ENCODE measurements at regions of chr22 and their contacts with region 1.

Region 1: GRCh38 chr22:38777087-38777671 is 16.8 kb downstream of the DNAL4 start:
- DNase-seq: no peak
- H3K4me3 ChIP-seq: no peak overlapping the region
- H3K27ac ChIP-seq: no peak overlapping the region
- H3K4me1 ChIP-seq: no peaks in the 10 kb centered on the region
- H3K27me3 ChIP-seq: no peaks in the 10 kb centered on the region
- CTCF ChIP-seq: no peak

Region 2: DNA sequence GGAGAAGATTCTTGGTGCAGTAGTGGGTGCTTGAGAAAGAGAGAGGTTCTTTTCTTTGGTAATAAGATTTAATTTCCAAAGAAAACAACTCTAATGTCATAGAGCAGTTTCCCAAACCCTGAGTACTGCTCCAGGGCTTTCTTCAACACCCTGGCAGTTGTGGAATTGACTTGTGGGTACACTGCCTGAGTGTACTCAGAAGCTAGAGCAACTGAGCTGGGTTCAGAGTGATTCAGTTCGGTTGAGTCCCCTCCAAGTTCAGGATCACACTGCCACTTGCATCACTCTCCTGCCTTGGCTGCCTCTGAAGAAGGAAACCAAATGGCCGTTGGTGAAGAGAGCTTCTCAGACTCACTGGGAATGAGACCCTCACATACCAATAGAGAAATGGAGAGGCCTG is 212.5 kb before region 1 on chr22:
- intact Hi-C with region 1: no loop called
- DNase-seq: no peak
- H3K4me3 ChIP-seq: no peak overlapping the region
- H3K27ac ChIP-seq: no peak overlapping the region
- H3K4me1 ChIP-seq: no peaks in the 10 kb centered on the region
- H3K27me3 ChIP-seq: no peaks in the 10 kb centered on the region
- CTCF ChIP-seq: no peak

Region 3: GRCh38 chr22:38843201-38843715 is 66.1 kb after region 1 on chr22:
- intact Hi-C with region 1: loop called (anchors 10 kb)
- DNase-seq: no peak
- H3K4me3 ChIP-seq: peak overlapping the region; percentile 37
- H3K27ac ChIP-seq: no peak overlapping the region
- H3K4me1 ChIP-seq: peaks cover 3% of the 10 kb centered on the region
- H3K27me3 ChIP-seq: peaks cover 23% of the 10 kb centered on the region
- CTCF ChIP-seq: no peak

Region 4: GRCh38 chr22:38981992-38982927 is 205.1 kb after region 1 on chr22 and contains the start of gene APOBEC3B:
- intact Hi-C with region 1: no loop called
- DNase-seq: peak; percentile 95
- H3K4me3 ChIP-seq: no peak within 1 kb of the TSS
- H3K27ac ChIP-seq: peak within 1 kb of the TSS; percentile 55
- H3K4me1 ChIP-seq: no peaks in the 10 kb centered on the region
- H3K27me3 ChIP-seq: no peaks in the 10 kb centered on the region
- CTCF ChIP-seq: no peak
- total RNA-seq, gene APOBEC3B: 9.3 to 18.9 TPM

Region 5: GRCh38 chr22:39039306-39040126 is 262.3 kb after region 1 on chr22:
- intact Hi-C with region 1: no loop called
- DNase-seq: no peak
- H3K4me3 ChIP-seq: no peak overlapping the region
- H3K27ac ChIP-seq: no peak overlapping the region
- H3K4me1 ChIP-seq: peaks cover 8% of the 10 kb centered on the region
- H3K27me3 ChIP-seq: no peaks in the 10 kb centered on the region
- CTCF ChIP-seq: no peak

Region 6: DNA sequence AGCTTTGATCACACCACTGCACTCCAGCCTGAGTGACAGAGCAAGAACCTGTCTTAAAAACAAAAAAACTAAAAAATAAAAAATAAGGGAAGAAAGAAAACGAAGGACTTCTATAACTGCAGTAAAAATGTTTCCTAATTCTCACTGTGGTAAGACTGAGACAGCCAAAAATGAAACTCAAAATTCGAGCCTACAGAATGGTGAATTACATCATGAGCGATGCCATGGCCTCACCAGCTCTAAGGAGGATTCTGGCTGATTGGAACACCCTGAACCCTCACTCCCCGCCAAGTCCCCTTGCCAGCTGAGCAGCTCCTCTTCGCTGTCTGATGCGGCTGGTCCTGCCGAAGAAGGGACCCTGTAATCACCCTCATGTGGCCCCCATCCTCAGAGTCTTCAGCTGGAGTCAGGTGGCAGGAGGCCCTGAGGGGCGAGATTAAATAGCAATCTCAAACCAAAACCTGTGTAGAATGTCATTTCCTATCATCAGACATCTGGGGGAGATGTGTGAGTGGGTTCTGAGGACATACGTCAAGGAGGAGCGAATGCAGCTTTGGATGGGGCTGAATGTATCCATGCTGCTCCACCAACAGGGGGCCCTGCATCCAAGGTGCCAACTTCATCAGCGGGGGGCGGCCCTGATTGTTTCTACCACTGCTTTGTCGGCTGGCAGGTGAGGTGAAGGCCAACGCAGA is 438.4 kb after region 1 on chr22:
- intact Hi-C with region 1: no loop called
- DNase-seq: no peak
- H3K4me3 ChIP-seq: no peak overlapping the region
- H3K27ac ChIP-seq: no peak overlapping the region
- H3K4me1 ChIP-seq: no peaks in the 10 kb centered on the region
- H3K27me3 ChIP-seq: no peaks in the 10 kb centered on the region
- CTCF ChIP-seq: no peak

Measured in colonic mucosa (tissue), 4 donors.